ENCODE measurements at regions of chr11 and their contacts with region 1.

Region 1: GRCh38 chr11:95867105-95867504 is 56.8 kb downstream of the MTMR2 start:
- DNase-seq: no peak
- ATAC-seq: no peak
- H3K4me3 ChIP-seq: no peak overlapping the region
- H3K27ac ChIP-seq: no peak overlapping the region
- H3K4me1 ChIP-seq: no peaks in the 10 kb centered on the region
- H3K27me3 ChIP-seq: no peaks in the 10 kb centered on the region
- CTCF ChIP-seq: no peak
- POLR2A ChIP-seq: no peak

Region 2: DNA sequence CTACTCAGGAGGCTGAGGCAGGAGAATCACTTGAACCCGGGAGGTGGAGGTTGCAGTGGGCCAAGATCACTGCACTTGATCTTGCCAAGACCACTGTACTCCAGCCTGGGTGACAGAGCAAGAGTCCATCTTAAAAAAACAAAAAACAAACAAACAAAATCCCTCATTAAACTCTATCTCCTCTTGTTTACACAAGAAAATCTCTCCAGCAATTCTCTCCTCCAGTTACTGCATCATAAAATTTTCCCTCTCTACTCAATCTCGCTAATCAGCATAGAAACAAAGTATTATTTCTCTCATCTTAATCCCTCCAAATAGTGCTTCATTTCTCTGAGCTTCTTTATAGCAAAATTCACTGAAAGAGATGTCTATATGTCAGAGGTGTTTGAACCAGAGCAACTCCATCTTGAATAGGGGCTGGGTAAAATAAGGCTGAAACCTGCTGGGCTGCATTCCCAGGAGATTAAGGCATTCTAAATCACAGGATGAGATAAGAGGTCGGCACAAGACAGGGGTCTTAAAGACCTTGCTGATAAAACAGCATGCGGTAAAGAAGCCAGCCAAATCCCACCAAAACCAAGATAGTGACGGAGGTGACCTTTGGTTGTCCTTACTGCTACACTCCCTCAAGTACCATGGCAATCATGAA is 37.0 kb after region 1 on chr11:
- intact Hi-C with region 1: loop called in 1 of 10 experiments (anchors 5 kb)
- DNase-seq: no peak
- ATAC-seq: no peak
- H3K4me3 ChIP-seq: no peak overlapping the region
- H3K27ac ChIP-seq: no peak overlapping the region
- H3K4me1 ChIP-seq: peaks cover 0 to 25% (median 0%) of the 10 kb centered on the region in 12 donors
- H3K27me3 ChIP-seq: no peaks in the 10 kb centered on the region
- CTCF ChIP-seq: no peak
- POLR2A ChIP-seq: no peak

Measured in heart left ventricle (tissue), 16 donors.